ENCODE measurements at regions of chr10 and their contacts with region 1.

Region 1: GRCh38 chr10:106355450-106355849 is 809.1 kb downstream of the SORCS1 start:
- DNase-seq: peak in 1 of 2 experiments; percentile 60
- H3K4me3 ChIP-seq: no peak overlapping the region
- H3K27ac ChIP-seq: no peak overlapping the region
- H3K4me1 ChIP-seq: no peaks in the 10 kb centered on the region
- H3K27me3 ChIP-seq: no peaks in the 10 kb centered on the region
- CTCF ChIP-seq: peak in 2 of 3 experiments; percentile 35 to 55; a peak in 2 of 4 replicates
- EP300 ChIP-seq: no peak
- POLR2A ChIP-seq: no peak
- RAD21 ChIP-seq: peak; percentile 58 to 59

Region 2: GRCh38 chr10:106147021-106147420 is 208.4 kb before region 1 on chr10:
- CTCF ChIA-PET with region 1: no interaction called
- POLR2A ChIA-PET with region 1: no interaction called
- DNase-seq: no peak
- H3K4me3 ChIP-seq: no peak overlapping the region
- H3K27ac ChIP-seq: no peak overlapping the region
- H3K4me1 ChIP-seq: no peaks in the 10 kb centered on the region
- H3K27me3 ChIP-seq: no peaks in the 10 kb centered on the region
- CTCF ChIP-seq: no peak
- EP300 ChIP-seq: no peak
- POLR2A ChIP-seq: no peak
- RAD21 ChIP-seq: no peak

Region 3: GRCh38 chr10:106189292-106189691 is 166.2 kb before region 1 on chr10:
- CTCF ChIA-PET with region 1: interaction called, 10 read pairs
- POLR2A ChIA-PET with region 1: no interaction called
- DNase-seq: peak; percentile 9 to 53
- H3K4me3 ChIP-seq: no peak overlapping the region
- H3K27ac ChIP-seq: no peak overlapping the region
- H3K4me1 ChIP-seq: no peaks in the 10 kb centered on the region
- H3K27me3 ChIP-seq: no peaks in the 10 kb centered on the region
- CTCF ChIP-seq: peak; percentile 30 to 85 (median 70)
- EP300 ChIP-seq: no peak
- POLR2A ChIP-seq: no peak
- RAD21 ChIP-seq: peak; percentile 78 to 80

Region 4: DNA sequence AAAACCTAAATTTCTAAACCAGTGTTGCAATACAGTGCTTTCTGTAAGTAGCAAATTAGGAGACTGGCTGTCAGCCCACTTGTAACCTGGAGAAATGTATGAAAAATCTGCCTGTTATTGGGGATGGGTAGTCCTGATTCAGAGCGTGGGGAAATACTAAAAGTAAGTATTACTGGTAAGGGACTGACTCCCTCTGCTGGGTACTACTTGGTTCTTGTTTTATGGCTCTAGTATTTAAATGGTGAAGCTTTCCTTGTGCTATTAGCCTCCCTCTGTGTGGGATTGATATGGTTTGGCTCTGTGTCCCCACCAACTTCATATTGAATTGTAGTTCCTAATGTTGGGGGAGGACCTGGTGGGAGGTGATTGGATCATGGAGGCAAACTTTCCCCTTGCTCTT is 77.1 kb before region 1 on chr10:
- CTCF ChIA-PET with region 1: interaction called, 12 read pairs
- POLR2A ChIA-PET with region 1: no interaction called
- DNase-seq: no peak
- H3K4me3 ChIP-seq: no peak overlapping the region
- H3K27ac ChIP-seq: no peak overlapping the region
- H3K4me1 ChIP-seq: no peaks in the 10 kb centered on the region
- H3K27me3 ChIP-seq: no peaks in the 10 kb centered on the region
- CTCF ChIP-seq: peak in 2 of 3 experiments; percentile 7 to 27; a peak in 2 of 4 replicates
- EP300 ChIP-seq: no peak
- POLR2A ChIP-seq: no peak
- RAD21 ChIP-seq: peak; percentile 51

Region 5: GRCh38 chr10:106311590-106311989 is 43.9 kb before region 1 on chr10:
- CTCF ChIA-PET with region 1: no interaction called
- POLR2A ChIA-PET with region 1: no interaction called
- DNase-seq: no peak
- H3K4me3 ChIP-seq: no peak overlapping the region
- H3K27ac ChIP-seq: no peak overlapping the region
- H3K4me1 ChIP-seq: peaks cover 0 to 4% (median 2%) of the 10 kb centered on the region in 4 experiments; a peak in 2 of 7 replicates
- H3K27me3 ChIP-seq: no peaks in the 10 kb centered on the region
- CTCF ChIP-seq: no peak
- EP300 ChIP-seq: no peak
- POLR2A ChIP-seq: no peak
- RAD21 ChIP-seq: no peak

Measured in H1 (cell line).